BJ (cell line): ENCODE measurements at regions of chr3 and their contacts with region 1.

Region 1: DNA sequence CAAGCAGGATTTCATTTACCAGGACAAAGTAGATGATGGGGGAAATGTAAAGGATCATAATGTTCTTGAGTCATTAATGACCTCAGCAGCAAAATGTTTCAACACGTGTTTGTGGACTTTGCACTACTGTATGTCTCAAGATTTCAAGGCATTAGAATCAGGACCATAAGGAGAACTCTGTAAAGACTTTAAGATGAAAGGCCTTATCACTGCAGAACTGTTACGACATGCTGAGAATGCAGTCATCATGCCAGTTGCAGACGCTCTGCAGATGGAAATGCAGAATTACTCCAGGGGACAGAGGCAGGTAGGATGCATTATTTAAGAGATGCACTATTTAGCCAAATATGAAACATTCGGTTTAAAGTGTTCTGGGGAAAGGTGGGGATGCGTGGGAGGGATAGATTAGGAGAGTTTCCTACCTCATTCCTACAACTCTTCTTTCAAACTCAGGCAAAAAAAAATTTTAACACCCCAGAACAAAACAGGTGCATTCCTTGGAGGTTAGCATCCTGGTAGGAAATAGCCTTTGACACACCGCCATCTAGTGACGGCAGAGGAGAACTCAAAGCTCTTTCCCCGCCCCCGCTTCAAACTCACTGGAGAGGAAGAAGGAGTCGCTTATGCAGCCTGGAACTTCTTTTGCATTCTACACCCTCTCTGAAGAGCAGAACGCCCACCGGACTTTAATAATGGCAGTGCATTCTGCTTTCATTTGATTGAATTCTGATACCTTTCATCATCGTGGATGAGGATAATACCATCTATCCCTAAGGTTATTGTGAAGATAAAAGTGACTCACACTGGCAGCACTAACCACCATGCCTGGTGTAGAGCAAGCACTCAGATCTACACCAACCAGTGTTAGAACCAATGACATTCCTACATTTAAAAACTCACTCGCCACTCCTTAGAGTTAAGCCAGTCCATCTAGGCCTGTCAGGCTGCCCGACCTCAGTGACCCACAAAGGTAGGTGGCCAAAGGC is 43.1 kb upstream of the TOPAZ1 start:
- DNase-seq: peak; percentile 1
- H3K4me3 ChIP-seq: no peak overlapping the region
- H3K27me3 ChIP-seq: peaks cover 4% of the 10 kb centered on the region; the same call in 1 of the 2 replicates
- CTCF ChIP-seq: peak; percentile 85

Region 2: GRCh38 chr3:43996379-43997301 is 201.9 kb before region 1 on chr3:
- CTCF ChIA-PET with region 1: interaction called, 16 read pairs
- POLR2A ChIA-PET with region 1: no interaction called
- DNase-seq: no peak
- H3K4me3 ChIP-seq: peak overlapping the region; percentile 49
- H3K27me3 ChIP-seq: peaks cover 1% of the 10 kb centered on the region; the same call in 1 of the 2 replicates
- CTCF ChIP-seq: peak; percentile 52

Region 3: DNA sequence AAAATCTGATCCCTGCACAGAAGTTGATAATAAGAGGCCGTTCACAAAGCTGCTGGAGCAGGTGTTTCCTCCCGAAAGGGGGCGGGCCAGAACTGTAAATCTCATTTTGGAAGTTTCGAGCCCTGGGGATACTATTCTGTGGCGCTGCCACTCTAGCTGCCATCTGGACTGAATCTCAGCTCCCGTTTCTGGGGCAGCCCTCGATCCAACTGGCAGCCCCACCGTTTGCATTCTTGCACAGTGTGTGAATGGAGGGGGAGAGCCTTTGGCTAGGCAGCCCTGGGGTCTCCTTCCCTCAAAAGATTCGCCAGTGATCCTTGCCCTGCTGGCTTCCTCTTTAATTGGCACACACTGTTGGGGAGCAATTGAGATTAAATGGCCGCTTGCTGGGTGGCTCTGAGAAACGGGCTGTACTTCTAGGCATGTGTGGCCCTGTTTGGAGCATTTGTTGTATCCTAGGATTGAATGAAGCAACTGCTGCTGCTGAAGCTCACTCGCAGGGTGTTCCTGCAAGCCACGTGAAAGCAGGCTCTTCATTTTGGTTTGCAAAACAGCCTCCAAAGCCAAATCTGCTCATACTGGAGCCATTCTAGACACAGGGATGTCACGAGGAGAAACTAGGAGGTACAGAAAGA is 14.1 kb before region 1 on chr3:
- CTCF ChIA-PET with region 1: interaction called, 29 read pairs
- POLR2A ChIA-PET with region 1: no interaction called
- DNase-seq: no peak
- H3K4me3 ChIP-seq: no peak overlapping the region
- H3K27me3 ChIP-seq: peaks cover 7% of the 10 kb centered on the region
- CTCF ChIP-seq: no peak

Region 4: DNA sequence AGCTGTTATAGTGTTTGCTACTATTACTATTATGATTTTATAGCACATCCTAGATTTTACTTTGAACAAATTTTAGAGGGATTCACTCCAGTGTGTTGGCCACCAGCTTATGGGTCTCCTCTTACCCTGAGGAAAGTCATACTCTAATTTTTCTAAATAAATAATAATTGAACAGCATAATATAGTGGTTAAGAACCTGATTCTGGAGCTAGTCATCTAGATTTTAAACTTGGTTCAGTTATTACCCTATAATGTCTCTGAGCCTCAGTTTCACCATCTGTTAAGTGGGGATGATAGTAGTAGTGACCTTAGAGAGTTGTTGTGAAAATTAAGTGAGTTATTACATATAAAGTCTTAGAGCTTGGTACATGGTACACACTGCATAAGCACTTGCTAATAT is 12.4 kb after region 1 on chr3:
- CTCF ChIA-PET with region 1: interaction called, 10 read pairs
- POLR2A ChIA-PET with region 1: no interaction called
- DNase-seq: no peak
- H3K4me3 ChIP-seq: no peak overlapping the region
- H3K27me3 ChIP-seq: peaks cover 6% of the 10 kb centered on the region; the same call in 1 of the 2 replicates
- CTCF ChIP-seq: no peak

Region 5: GRCh38 chr3:44501971-44502370 is 303.4 kb after region 1 on chr3:
- CTCF ChIA-PET with region 1: no interaction called
- POLR2A ChIA-PET with region 1: no interaction called
- DNase-seq: no peak
- H3K4me3 ChIP-seq: no peak overlapping the region
- H3K27me3 ChIP-seq: no peaks in the 10 kb centered on the region
- CTCF ChIP-seq: no peak

Region 6: GRCh38 chr3:45273681-45274515 is 1075.3 kb after region 1 on chr3:
- CTCF ChIA-PET with region 1: no interaction called
- POLR2A ChIA-PET with region 1: no interaction called
- DNase-seq: peak; percentile 9
- H3K4me3 ChIP-seq: no peak overlapping the region
- H3K27me3 ChIP-seq: no peaks in the 10 kb centered on the region; the same call in 1 of the 2 replicates
- CTCF ChIP-seq: no peak